Aorta (tissue), 5 donors: ENCODE measurements at regions of chr6 and their contacts with region 1.

Region 1: DNA sequence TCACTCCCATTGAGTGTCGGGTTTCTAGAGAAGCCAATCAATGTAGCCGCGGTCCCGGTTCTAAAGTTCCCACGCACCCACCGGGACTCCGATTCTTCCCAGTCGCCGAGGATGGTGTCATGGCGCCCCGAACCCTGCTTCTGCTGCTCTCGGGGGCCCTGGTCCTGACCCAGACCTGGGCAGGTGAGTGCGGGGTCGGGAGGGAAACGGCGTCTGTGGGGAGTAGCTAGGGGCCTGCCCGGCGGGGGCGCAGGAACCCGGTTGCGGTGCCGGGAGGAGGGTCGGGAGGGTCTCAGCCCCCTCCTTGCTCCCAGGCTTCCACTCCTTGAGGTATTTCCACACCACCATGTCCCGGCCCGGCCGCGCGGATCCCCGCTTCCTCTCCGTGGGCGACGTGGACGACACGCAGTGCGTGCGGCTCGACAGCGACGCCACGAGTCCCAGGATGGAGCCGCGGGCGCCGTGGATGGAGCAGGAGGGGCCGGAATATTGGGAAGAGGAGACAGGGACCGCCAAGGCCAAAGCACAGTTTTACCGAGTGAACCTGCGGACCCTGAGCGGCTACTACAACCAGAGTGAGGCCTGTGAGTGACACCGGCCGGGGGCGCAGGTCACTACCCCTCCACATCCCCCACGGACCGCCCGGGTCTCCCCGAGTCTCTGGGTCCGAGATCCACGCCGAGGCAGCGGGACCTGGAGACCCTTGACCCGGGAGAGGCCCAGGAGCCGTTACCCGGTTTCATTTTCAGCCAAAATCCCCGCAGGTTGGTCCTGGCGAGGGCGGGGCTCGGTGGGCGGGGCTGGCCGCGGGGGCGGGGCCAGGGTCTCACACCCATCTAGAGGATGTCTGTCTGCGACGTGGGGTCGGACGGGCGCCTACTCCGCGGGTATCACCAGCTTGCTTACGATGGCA is 35.2 kb upstream of the HLA-G start:
- DNase-seq: peak; percentile 85 to 93
- ATAC-seq: peak; percentile 97
- H3K4me3 ChIP-seq: peak overlapping the region; percentile 33 to 54
- H3K27ac ChIP-seq: no peak overlapping the region
- H3K4me1 ChIP-seq: no peaks in the 10 kb centered on the region
- H3K27me3 ChIP-seq: no peaks in the 10 kb centered on the region

Region 2: DNA sequence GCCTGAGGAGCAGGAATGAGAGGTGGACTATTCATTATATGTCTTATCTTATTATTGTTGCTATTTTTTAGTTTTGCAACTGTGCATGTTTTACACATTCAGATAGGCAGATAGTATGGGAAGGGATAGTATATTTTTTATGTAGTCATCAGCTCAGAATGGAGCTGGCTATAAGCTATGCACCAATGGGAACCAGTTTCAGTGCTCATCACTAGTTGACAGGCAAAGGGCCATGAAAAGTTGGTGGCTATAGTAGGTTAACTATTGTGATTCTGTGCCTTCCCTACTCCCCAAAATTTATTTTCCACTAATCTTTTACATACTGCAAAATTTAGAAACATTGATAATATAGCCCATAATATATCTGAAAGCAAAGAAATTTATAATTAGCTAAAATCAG is 227.5 kb before region 1 on chr6:
- intact Hi-C with region 1: no loop called
- DNase-seq: no peak
- ATAC-seq: no peak
- H3K4me3 ChIP-seq: no peak overlapping the region
- H3K27ac ChIP-seq: no peak overlapping the region
- H3K4me1 ChIP-seq: no peaks in the 10 kb centered on the region
- H3K27me3 ChIP-seq: no peaks in the 10 kb centered on the region

Region 3: DNA sequence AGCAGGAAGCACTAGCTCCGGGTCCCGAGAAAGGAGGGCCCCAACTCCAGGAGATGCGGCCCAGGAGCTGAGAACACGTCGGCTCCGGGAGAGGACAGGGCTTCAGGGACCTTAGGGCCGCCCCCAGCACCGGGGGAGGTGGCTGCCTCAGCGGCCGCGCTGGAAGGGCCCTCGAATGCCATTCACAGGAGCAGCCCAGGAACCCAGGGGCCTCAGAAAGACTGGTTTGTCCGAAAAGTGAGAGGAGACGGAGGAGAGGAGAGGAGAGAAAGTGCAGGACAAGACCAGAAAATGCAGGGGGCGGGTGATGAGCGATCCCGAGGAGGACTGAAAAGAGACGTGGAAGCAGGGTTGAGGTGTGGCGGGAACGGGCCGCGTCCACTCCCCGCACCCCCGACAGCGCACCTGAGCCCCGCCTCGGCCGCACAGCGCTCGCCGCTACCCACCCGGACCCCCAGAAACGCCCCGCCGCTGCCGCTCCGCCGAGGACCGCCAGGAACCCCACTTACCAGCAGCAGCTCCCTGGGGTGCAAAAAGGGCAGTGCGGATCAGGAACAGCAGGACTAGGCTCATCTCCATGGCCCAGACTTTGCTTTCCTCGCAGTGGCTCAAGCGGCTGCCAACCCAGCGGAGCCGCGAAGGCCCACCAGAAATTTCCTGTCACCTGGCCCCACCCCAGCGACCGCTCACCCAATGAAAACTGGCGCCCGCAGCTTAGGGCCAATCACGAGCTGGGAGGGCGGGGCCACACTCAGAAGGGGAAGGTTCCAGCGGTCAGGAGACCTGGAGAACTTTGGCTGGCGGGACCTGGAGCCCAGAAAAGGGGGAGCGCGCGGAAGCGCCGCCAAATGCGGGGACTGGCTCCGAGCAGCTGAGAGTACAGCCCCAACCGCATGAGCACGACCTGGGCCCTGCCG is 43.7 kb before region 1 on chr6:
- intact Hi-C with region 1: loop called in 1 of 2 experiments (anchors 5 kb)
- DNase-seq: peak; percentile 97
- ATAC-seq: peak; percentile 90
- H3K4me3 ChIP-seq: peak overlapping the region; percentile 52
- H3K27ac ChIP-seq: peak overlapping the region in 1 of 2 donors; percentile 74
- H3K4me1 ChIP-seq: no peaks in the 10 kb centered on the region
- H3K27me3 ChIP-seq: no peaks in the 10 kb centered on the region

Region 4: DNA sequence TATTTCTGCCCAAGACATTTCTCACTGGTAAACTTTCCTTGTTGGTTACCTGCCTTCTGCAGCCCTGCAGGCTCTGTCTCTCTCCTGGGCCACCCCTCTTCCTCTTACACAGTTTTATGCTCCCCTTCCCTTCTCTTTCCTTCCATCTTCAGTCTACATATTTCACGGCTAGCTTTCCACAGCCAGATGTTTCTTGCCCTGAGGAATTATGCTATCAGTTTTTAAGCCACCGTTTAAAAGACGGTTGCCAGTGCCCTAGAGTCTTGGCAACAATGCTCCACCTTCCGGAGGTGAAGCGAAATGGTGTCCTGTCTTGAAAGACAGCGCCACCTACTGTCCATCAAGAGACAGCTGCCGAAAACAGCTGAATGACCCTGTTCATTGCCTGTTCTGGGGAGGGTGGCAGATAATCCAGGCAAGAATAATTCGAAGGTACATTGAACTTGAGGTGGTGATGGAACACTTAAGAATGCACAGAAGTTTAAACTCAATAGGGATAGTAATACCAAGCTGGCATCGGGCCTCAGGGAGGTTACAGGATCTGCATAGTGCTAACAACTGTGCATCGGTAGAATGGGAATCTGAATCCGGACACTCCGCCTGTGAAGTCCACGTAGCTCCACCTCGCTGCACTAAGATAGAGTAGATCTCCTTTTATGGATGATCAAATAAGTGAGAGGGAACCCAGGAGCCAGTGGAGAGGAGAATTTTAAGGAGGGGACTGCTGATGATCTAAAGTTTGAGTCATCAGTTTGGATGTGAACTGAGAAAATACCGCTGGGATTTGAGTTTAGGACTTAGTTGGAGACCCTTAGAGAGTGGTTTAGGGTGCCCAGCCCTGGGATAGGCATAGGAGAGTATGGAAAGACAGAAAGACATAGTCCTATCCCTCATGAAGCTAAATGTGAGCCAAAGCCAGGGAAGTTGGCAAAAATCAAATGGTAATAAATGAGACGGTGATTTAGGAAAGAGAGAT is 338.8 kb after region 1 on chr6:
- intact Hi-C with region 1: no loop called
- DNase-seq: peak in 1 of 2 donors; percentile 62
- ATAC-seq: peak; percentile 88
- H3K4me3 ChIP-seq: no peak overlapping the region
- H3K27ac ChIP-seq: no peak overlapping the region
- H3K4me1 ChIP-seq: no peaks in the 10 kb centered on the region
- H3K27me3 ChIP-seq: no peaks in the 10 kb centered on the region